ENCODE measurements at regions of chr10 and their contacts with region 1.

Region 1: GRCh38 chr10:26855186-26855585 is 5.6 kb downstream of the ABI1 start:
- DNase-seq: no peak
- H3K4me3 ChIP-seq: no peak overlapping the region
- H3K27ac ChIP-seq: no peak overlapping the region
- H3K4me1 ChIP-seq: peaks cover 37% of the 10 kb centered on the region
- CTCF ChIP-seq: no peak

Region 2: DNA sequence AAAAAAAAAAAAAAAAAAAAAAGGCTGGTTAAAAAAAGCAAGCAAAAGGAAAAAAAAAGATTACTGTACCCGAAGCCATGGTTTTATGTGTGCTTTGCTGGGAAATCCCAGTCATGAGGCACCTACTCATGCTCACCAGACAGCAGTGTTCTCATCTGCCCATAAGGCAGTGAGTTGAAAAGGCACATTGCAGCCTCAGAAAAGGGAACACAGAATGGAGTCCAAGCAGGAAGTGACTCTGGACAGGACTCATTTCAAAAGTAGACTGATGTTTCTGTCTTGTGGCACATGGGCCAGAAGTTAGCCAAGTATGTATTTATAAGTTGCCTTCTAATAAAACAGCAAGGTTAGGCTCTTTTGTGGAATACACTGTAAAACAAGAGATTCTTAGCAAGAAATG is 117.5 kb before region 1 on chr10:
- CTCF ChIA-PET with region 1: no interaction called
- POLR2A ChIA-PET with region 1: no interaction called
- intact Hi-C with region 1: loop called (anchors 2 kb)
- DNase-seq: peak; percentile 64
- H3K4me3 ChIP-seq: no peak overlapping the region
- H3K27ac ChIP-seq: peak overlapping the region; percentile 71
- H3K4me1 ChIP-seq: peaks cover 30% of the 10 kb centered on the region
- CTCF ChIP-seq: no peak

Measured in OCI-LY7 (cell line).